MCF 10A (cell line): ENCODE measurements at regions of chr20 and their contacts with region 1.

Region 1: DNA sequence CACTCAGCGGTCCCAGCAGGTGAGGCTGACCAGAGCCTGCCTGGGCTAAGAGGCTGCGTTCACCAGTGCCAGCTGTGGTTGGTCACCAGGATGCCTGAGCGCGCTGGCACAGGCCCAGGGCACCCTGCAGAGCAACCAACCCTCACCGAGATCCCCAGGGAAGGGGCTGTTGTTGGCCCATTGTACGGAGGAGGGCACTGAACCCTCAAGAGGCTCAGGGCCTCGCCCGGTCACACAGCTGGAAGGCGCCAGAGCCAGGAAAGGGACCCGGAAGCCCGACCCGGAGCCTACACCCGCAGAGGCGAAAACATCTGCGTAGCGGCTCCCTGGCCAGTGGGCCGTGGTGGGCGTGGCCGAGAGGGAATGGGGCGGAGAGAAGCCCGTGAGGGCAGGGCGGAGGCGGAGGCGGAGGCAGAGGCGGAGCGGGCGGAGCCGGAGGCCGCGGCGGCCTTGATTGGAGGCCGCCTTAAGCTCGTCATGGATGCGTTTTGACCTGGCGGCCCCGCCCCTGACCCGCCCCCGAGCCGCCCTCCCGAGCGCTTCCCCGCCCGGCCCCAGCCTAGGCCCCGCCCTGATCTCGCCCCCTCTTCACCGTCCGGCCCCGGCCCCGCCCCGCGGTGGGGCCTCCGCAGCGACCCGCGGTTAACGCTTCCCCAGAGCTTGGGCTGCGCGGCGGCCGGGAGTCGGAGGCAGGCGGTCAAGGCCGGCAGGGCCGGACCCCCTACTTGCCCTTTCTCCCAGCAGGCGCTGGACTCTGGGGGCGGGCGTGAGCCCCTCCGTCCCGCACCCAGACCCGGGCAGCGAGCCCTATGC is 2.2 kb upstream of the MRGBP start:
- DNase-seq: peak; percentile 94
- H3K4me3 Mint-ChIP-seq: peak overlapping the region; percentile 76
- H3K27ac Mint-ChIP-seq: peak overlapping the region; percentile 87
- H3K4me1 Mint-ChIP-seq: peaks cover 17% of the 10 kb centered on the region
- H3K27me3 Mint-ChIP-seq: no peaks in the 10 kb centered on the region
- CTCF ChIP-seq: no peak

Region 2: DNA sequence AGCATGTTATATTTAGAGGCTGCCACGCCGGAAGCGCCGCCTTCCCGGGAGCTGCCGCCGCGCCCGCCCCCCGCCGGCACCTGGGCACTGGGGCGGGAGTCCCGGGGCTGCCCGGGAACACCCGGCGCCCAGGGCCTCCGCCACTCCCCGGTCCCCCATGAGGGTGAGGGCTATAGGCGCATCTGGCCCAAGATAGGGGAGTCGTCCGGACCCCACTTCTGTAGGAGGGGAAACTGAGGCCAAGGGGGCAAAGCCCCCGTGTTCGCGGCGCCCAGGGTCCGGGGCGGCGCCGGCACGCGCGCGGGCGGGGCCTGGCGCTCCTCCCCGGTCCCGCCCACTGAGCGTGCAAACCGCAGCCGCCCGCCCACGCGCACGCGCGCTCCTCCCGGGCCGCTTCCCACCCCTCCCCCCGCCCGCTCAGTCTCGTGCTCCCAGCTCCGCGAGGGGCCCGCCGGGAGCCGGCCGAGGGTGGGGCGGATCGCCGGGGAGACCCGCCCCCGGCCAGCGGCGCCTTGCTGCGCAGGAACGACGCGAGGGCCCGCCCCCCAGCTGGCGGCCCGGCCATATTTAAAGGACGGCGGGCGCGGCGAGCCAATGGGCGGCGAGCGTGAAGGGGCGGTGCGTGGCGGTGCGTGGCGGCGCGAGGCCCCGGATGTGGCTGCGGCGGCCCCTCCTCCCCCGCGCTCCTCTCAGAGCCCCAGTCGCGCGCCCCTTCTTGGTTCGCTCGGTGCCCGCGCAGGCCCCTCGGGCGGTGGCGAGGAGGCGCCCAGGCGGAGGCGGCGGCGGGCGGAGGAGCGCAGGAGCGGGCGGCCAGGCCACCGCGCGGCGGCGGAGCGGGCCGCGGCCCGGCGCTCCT is 672.1 kb before region 1 on chr20 and contains the start of gene LSM14B:
- CTCF ChIA-PET with region 1: no interaction called
- POLR2A ChIA-PET with region 1: no interaction called
- intact Hi-C with region 1: no loop called
- DNase-seq: peak; percentile 94
- H3K4me3 Mint-ChIP-seq: peak within 1 kb of the TSS; percentile 89
- H3K27ac Mint-ChIP-seq: peak within 1 kb of the TSS; percentile 95
- H3K4me1 Mint-ChIP-seq: peaks cover 10% of the 10 kb centered on the region
- H3K27me3 Mint-ChIP-seq: no peaks in the 10 kb centered on the region
- CTCF ChIP-seq: no peak
- total RNA-seq, gene LSM14B: 33.3 and 35.1 TPM in 2 replicates

Region 3: GRCh38 chr20:62302341-62303058 is 491.6 kb before region 1 on chr20 and contains the start of gene ADRM1:
- CTCF ChIA-PET with region 1: no interaction called
- POLR2A ChIA-PET with region 1: interaction called, 5 read pairs
- intact Hi-C with region 1: loop called (anchors 2 kb)
- DNase-seq: peak; percentile 95
- H3K4me3 Mint-ChIP-seq: peak within 1 kb of the TSS; percentile 90
- H3K27ac Mint-ChIP-seq: peak within 1 kb of the TSS; percentile 95
- H3K4me1 Mint-ChIP-seq: peaks cover 18% of the 10 kb centered on the region
- H3K27me3 Mint-ChIP-seq: no peaks in the 10 kb centered on the region
- CTCF ChIP-seq: peak; percentile 95
- total RNA-seq, gene ADRM1: 98.0 and 127 TPM in 2 replicates

Region 4: GRCh38 chr20:62616728-62617621 is 177.1 kb before region 1 on chr20:
- CTCF ChIA-PET with region 1: interaction called, 20 read pairs
- POLR2A ChIA-PET with region 1: interaction called, 3 read pairs
- intact Hi-C with region 1: no loop called
- DNase-seq: peak; percentile 75
- H3K4me3 Mint-ChIP-seq: peak overlapping the region; percentile 3
- H3K27ac Mint-ChIP-seq: no peak overlapping the region
- H3K4me1 Mint-ChIP-seq: peaks cover 2% of the 10 kb centered on the region
- H3K27me3 Mint-ChIP-seq: no peaks in the 10 kb centered on the region
- CTCF ChIP-seq: peak; percentile 98

Region 5: DNA sequence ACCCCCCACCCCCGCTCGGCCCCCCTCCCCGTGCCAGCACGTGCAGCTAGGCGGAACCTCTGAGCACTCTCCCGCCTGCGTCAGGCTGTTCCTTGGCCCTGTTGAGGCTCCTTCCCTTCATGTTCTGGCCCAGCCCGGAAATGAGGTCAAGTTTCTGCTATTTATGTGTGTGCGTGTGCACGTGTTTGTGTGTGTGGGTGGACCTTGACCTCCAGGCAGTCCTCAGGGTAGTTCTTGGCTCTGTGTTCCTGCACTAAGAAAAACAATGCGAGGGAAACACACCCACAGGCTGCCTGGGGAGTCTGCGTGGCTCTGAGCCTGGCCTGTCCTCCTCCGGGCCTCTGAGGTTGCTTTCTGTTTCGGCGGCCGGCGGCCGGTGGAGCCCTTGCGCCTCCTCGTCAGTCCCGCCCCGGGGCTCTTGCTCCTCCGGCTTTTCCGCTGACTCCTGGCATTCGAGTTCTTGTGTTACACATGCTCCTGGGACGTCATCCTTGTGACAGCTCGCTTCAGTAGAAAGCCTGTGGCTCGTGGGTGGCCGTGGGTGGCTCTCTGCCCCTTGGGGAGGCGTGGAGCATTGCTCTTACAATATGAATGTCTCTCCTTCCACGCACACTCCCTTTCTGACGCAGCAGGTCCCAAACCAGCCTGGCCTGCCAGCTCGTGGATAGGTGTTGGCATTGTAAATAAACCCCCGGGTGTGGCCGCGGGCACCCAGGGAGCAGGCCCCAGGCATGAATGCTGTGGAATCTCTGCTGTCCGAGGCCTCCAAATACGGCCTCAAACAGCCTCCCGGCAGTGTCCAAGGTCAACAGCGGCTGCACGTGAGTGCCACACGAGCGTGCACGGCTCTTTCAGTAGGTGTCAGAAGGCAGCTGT is 141.8 kb before region 1 on chr20:
- CTCF ChIA-PET with region 1: interaction called, 6 read pairs
- POLR2A ChIA-PET with region 1: interaction called, 17 read pairs
- intact Hi-C with region 1: no loop called
- DNase-seq: peak; percentile 99
- H3K4me3 Mint-ChIP-seq: peak overlapping the region; percentile 72
- H3K27ac Mint-ChIP-seq: peak overlapping the region; percentile 98
- H3K4me1 Mint-ChIP-seq: peaks cover 11% of the 10 kb centered on the region
- H3K27me3 Mint-ChIP-seq: no peaks in the 10 kb centered on the region
- CTCF ChIP-seq: no peak

Region 6: DNA sequence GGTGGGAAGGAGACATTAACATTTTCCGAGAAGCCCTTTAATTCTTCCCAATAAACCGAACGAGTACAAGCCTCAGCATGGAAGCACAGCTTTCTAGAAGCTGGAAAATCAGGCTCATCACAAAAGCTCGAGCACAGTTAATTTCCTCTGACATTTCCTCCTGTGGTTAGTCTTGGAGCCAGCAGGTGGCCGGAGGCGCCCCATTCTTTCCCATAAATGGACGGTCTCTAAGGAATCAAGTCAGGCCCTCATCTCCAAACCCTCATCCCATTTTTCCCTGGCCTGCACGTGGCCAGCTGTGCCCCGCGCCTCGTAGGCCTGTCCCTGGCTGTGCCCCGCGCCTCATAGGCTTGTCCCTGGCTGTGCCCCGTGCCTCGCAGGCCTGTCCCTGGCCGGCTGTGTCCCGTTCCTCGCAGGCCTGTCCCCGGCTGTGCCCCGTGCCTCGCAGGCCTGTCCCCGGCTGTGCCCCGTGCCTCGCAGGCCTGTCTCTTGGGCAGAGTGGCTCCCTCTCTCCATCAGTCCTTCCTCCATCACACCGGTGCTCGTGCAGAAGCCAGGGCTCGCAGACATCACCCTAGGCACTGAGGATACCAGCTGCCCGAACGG is 105.2 kb before region 1 on chr20:
- CTCF ChIA-PET with region 1: interaction called, 26 read pairs
- POLR2A ChIA-PET with region 1: no interaction called
- intact Hi-C with region 1: no loop called
- DNase-seq: no peak
- H3K4me3 Mint-ChIP-seq: no peak overlapping the region
- H3K27ac Mint-ChIP-seq: no peak overlapping the region
- H3K4me1 Mint-ChIP-seq: peaks cover 5% of the 10 kb centered on the region
- H3K27me3 Mint-ChIP-seq: peaks cover 1% of the 10 kb centered on the region
- CTCF ChIP-seq: no peak

Region 7: GRCh38 chr20:62740286-62741141 is 53.6 kb before region 1 on chr20:
- CTCF ChIA-PET with region 1: interaction called, 3 read pairs
- POLR2A ChIA-PET with region 1: interaction called, 21 read pairs
- intact Hi-C with region 1: no loop called
- DNase-seq: peak; percentile 96
- H3K4me3 Mint-ChIP-seq: peak overlapping the region; percentile 71
- H3K27ac Mint-ChIP-seq: peak overlapping the region; percentile 67
- H3K4me1 Mint-ChIP-seq: peaks cover 20% of the 10 kb centered on the region
- H3K27me3 Mint-ChIP-seq: no peaks in the 10 kb centered on the region
- CTCF ChIP-seq: no peak

Region 8: GRCh38 chr20:62808211-62808865 is 14.2 kb after region 1 on chr20:
- CTCF ChIA-PET with region 1: interaction called, 15 read pairs
- POLR2A ChIA-PET with region 1: interaction called, 19 read pairs
- intact Hi-C with region 1: no loop called
- DNase-seq: peak; percentile 62
- H3K4me3 Mint-ChIP-seq: no peak overlapping the region
- H3K27ac Mint-ChIP-seq: no peak overlapping the region
- H3K4me1 Mint-ChIP-seq: peaks cover 10% of the 10 kb centered on the region
- H3K27me3 Mint-ChIP-seq: no peaks in the 10 kb centered on the region
- CTCF ChIP-seq: peak; percentile 90